ENCODE measurements at regions of chr7 and their contacts with region 1.

Region 1: GRCh38 chr7:103148994-103149807 is at the start of gene NAPEPLD:
- DNase-seq: peak; percentile 93
- H3K4me3 ChIP-seq: peak within 1 kb of the TSS; percentile 66 to 79 (median 72)
- H3K27ac ChIP-seq: peak within 1 kb of the TSS; percentile 91 to 98 (median 94)
- H3K4me1 ChIP-seq: peaks cover 3 to 30% (median 21%) of the 10 kb centered on the region in 4 donors
- H3K27me3 ChIP-seq: no peaks in the 10 kb centered on the region
- CTCF ChIP-seq: no peak
- EP300 ChIP-seq: no peak
- POLR2A ChIP-seq: no peak
- total RNA-seq, gene NAPEPLD: 11.0 to 12.8 (median 11.8) TPM

Region 2: GRCh38 chr7:103074519-103075336 is 74.5 kb before region 1 on chr7 and contains the starts of genes ARMC10 and FBXL13:
- intact Hi-C with region 1: loop called (anchors 1 kb)
- DNase-seq: peak; percentile 95
- H3K4me3 ChIP-seq: peak within 1 kb of the TSS; percentile 68 to 81 (median 74)
- H3K27ac ChIP-seq: peak within 1 kb of the TSS; percentile 90 to 93 (median 93)
- H3K4me1 ChIP-seq: peaks cover 0 to 24% (median 21%) of the 10 kb centered on the region in 4 donors
- H3K27me3 ChIP-seq: no peaks in the 10 kb centered on the region
- CTCF ChIP-seq: peak in 3 of 4 experiments; percentile 12 to 24 (median 16)
- EP300 ChIP-seq: no peak
- POLR2A ChIP-seq: no peak
- total RNA-seq, gene ARMC10: 41.5 to 49.0 (median 46.5) TPM
- total RNA-seq, gene FBXL13: 2.1 to 3.3 (median 2.5) TPM

Region 3: DNA sequence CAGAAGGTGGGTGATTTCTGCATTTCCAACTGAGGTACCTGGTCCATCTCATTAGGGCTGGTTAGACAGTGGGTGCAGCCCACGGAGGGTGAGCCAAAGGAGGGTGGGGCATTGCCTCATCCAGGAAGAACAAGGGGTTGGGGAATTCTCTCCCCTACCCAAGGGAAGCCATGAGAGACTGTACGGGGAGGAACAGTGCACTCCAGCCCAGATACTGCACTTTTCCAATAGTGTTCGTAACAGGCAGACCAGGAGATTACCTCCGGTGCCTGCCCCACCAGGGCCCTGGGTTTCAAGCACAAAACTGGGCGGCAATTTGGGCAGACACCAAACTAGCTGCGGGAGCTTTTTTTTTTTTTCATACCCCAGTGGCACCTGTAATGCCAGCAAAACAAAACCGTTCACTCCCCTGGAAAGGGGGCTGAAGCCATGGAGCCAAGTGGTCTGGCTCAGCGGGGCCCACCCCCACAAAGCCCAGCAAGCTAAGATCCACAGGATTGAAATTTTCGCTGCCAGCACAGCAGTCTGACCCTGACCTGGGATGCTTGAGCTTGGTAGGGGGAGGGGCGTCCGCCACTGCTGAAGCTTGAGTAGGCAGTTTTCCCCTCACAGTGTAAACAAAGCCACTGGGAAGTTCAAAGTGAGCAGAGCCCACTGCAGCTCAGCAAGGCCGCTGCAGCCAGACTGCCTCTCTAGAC is 43.0 kb before region 1 on chr7:
- intact Hi-C with region 1: no loop called
- DNase-seq: no peak
- H3K4me3 ChIP-seq: no peak overlapping the region
- H3K27ac ChIP-seq: no peak overlapping the region
- H3K4me1 ChIP-seq: peaks cover 0 to 8% (median 0%) of the 10 kb centered on the region in 4 donors
- H3K27me3 ChIP-seq: no peaks in the 10 kb centered on the region
- CTCF ChIP-seq: no peak
- EP300 ChIP-seq: no peak
- POLR2A ChIP-seq: no peak

Region 4: DNA sequence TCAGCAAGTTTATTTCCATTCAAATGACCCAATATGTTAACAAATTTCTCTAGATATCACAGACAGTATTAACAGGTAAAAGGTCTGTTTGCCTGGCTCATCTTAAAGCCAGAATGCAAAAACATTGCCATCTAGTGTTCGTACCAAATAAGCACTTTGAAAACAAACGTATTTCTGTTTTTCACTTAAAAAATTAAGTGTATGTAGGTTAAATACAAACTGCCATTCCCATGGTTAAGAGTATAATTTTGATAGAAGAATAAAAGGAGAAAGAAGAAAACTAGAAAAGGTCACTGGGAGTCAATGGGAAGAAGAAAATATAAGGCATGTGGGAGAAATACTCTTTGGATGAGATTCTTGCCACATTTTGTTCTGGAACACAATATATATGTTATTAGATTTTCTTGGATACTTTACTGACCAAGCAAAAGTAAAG is 1007.7 kb after region 1 on chr7:
- intact Hi-C with region 1: no loop called
- DNase-seq: no peak
- H3K4me3 ChIP-seq: no peak overlapping the region
- H3K27ac ChIP-seq: no peak overlapping the region
- H3K4me1 ChIP-seq: no peaks in the 10 kb centered on the region
- H3K27me3 ChIP-seq: no peaks in the 10 kb centered on the region
- CTCF ChIP-seq: peak in 1 of 4 experiments; percentile 43
- EP300 ChIP-seq: no peak
- POLR2A ChIP-seq: no peak

Measured in sigmoid colon (tissue), 7 donors.